Left ventricle myocardium inferior (tissue), 1 donor: ENCODE measurements at regions of chr1 and their contacts with region 1.

Region 1: DNA sequence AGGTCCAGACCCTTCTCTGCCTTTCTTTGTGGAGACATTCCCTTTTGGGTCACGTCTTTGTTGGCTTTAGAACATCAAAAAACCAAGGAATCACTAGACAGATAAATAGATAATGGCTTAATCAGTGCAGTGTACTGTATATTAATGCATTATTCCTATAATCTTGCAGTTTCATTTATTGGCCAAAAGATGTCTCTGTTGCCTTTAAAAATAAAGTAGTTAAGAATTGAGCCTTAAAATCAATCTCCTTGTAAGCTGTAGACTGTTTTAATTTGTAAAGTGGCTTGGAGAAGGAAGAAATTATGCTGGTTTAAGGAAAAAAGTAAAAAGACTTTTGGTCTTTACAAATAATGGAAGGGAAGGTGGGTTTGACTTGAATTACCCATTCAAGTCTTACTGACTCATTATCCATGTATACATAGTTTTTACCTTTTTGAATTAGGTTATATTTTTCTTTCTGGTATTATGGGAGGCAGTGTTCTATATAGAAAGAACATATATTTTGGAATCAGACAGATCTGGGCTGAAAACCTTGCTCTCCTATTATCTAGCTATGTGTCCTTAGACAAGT is 84.6 kb downstream of the VPS13D start:
- DNase-seq: no peak
- H3K4me3 ChIP-seq: no peak overlapping the region
- H3K27ac ChIP-seq: peak overlapping the region; percentile 60
- H3K4me1 ChIP-seq: peaks cover 35% of the 10 kb centered on the region
- H3K27me3 ChIP-seq: no peaks in the 10 kb centered on the region
- CTCF ChIP-seq: peak; percentile 61

Region 2: GRCh38 chr1:11882814-11883538 is 431.4 kb before region 1 on chr1:
- intact Hi-C with region 1: no loop called
- DNase-seq: peak; percentile 90
- H3K4me3 ChIP-seq: no peak overlapping the region
- H3K27ac ChIP-seq: peak overlapping the region; percentile 91
- H3K4me1 ChIP-seq: peaks cover 90% of the 10 kb centered on the region
- H3K27me3 ChIP-seq: no peaks in the 10 kb centered on the region
- CTCF ChIP-seq: no peak

Region 3: DNA sequence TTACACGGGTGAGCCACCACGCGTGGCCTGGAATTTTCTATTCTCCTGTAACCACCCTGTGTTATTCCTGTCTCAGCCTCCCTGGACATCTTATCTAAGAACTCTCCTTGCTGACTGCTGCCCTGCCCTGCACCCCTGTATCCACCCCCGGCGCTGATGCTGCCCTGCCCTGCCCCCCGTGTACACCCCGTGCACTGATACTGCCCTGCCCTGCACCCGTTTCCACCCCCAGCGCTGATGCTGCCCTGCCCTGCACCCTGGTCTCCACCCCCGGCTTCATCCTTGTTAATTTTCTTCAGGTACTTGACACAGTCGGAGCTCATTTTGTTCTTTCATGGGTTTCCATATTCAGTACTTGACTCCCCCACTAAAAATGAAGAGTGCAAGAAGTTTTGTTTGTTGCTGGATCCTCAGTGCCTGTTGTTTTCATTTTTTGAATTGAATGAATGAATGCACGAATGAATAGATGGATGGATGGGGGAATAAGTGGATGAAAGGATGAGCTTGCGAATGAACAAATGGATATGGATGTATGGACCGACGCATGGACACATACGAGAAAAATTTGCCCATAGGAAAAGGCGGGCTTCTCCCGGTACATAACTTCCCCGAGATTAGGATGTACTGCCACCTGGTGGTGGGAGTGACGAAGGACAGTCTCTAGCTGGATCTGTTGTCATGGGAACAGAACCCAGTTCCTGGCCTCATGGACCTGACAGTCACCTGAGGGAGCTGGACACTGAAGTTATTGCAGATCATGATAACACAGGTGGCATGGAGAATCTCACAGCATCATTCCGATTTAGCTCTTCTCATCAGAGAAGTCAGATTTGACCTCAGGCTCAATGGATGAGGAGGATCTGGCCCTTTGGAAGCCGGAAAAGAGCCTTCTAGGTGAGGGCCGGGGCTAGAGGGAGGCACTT is 344.4 kb after region 1 on chr1:
- intact Hi-C with region 1: loop called (anchors 10 kb)
- DNase-seq: peak; percentile 67
- H3K4me3 ChIP-seq: no peak overlapping the region
- H3K27ac ChIP-seq: no peak overlapping the region
- H3K4me1 ChIP-seq: peaks cover 6% of the 10 kb centered on the region
- H3K27me3 ChIP-seq: no peaks in the 10 kb centered on the region
- CTCF ChIP-seq: peak; percentile 95